ENCODE measurements at regions of chr3 and their contacts with region 1.

Region 1: GRCh38 chr3:179147873-179148615 is at the start of gene PIK3CA:
- DNase-seq: peak; percentile 96
- H3K4me3 Mint-ChIP-seq: peak within 1 kb of the TSS; percentile 89
- H3K27ac Mint-ChIP-seq: peak within 1 kb of the TSS; percentile 88
- H3K4me1 Mint-ChIP-seq: peaks cover 38% of the 10 kb centered on the region
- H3K27me3 Mint-ChIP-seq: peaks cover 4% of the 10 kb centered on the region
- total RNA-seq, gene PIK3CA: 16.7 to 19.1 TPM

Region 2: DNA sequence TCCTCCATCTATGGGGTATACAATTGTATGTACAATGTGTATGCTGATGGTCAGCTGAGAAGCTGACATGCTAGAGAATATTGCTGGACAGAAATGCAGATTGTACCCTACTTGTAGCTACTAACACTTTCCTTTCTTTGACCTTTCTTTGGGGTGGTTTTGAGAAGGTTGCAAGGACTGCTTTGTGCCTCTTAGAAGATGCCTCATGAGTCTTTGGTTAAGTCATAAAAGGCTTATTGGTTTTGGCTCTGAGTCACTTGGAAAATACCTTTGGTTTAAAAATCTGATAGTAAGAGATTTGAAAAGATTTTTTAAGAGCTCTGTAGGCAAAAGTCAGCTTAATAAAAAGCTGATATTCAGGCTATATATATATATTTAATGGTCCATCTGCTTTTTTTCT is 147.9 kb before region 1 on chr3:
- CTCF ChIA-PET with region 1: no interaction called
- POLR2A ChIA-PET with region 1: no interaction called
- intact Hi-C with region 1: loop called (anchors 1 kb)
- DNase-seq: no peak
- H3K4me3 Mint-ChIP-seq: no peak overlapping the region
- H3K27ac Mint-ChIP-seq: no peak overlapping the region
- H3K4me1 Mint-ChIP-seq: peaks cover 9% of the 10 kb centered on the region
- H3K27me3 Mint-ChIP-seq: peaks cover 2% of the 10 kb centered on the region

Region 3: GRCh38 chr3:179071550-179072397 is 76.3 kb before region 1 on chr3 and contains the start of gene ZMAT3:
- CTCF ChIA-PET with region 1: interaction called, 3 read pairs
- POLR2A ChIA-PET with region 1: interaction called, 7 read pairs
- intact Hi-C with region 1: loop called (anchors 1 kb)
- DNase-seq: peak; percentile 89
- H3K4me3 Mint-ChIP-seq: peak within 1 kb of the TSS; percentile 96
- H3K27ac Mint-ChIP-seq: peak within 1 kb of the TSS; percentile 89
- H3K4me1 Mint-ChIP-seq: peaks cover 35% of the 10 kb centered on the region
- H3K27me3 Mint-ChIP-seq: no peaks in the 10 kb centered on the region
- total RNA-seq, gene ZMAT3: 9.0 TPM

Region 4: DNA sequence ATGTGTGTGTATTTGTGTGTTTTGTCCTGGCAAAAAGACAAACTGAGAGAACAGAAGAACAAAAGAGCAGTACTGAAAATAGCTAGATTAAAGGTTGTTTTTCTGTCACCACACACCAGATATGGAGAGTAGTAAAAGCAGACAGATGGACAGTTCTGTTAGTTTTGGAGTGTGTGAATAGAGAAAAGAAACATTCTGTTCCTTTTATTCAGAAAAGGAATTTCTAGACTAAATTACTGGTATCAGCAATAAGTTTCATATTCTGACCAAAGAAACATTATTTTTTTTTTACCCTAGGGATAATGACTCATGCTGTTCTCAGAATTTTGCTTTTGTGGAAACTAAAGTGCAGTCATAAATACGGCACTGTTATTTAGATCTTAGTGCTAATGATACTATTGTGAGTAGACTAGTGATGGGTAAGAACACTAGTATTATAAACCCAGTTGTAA is 33.0 kb after region 1 on chr3:
- CTCF ChIA-PET with region 1: interaction called, 7 read pairs
- POLR2A ChIA-PET with region 1: interaction called, 34 read pairs
- intact Hi-C with region 1: loop called (anchors 1 kb)
- DNase-seq: no peak
- H3K4me3 Mint-ChIP-seq: no peak overlapping the region
- H3K27ac Mint-ChIP-seq: no peak overlapping the region
- H3K4me1 Mint-ChIP-seq: peaks cover 40% of the 10 kb centered on the region
- H3K27me3 Mint-ChIP-seq: no peaks in the 10 kb centered on the region

Region 5: GRCh38 chr3:179309225-179310078 is 161.4 kb after region 1 on chr3:
- CTCF ChIA-PET with region 1: interaction called, 12 read pairs
- POLR2A ChIA-PET with region 1: no interaction called
- intact Hi-C with region 1: no loop called
- DNase-seq: no peak
- H3K4me3 Mint-ChIP-seq: no peak overlapping the region
- H3K27ac Mint-ChIP-seq: no peak overlapping the region
- H3K4me1 Mint-ChIP-seq: no peaks in the 10 kb centered on the region
- H3K27me3 Mint-ChIP-seq: no peaks in the 10 kb centered on the region

Region 6: GRCh38 chr3:179562591-179563270 is 414.7 kb after region 1 on chr3 and contains the start of gene ACTL6A:
- CTCF ChIA-PET with region 1: no interaction called
- POLR2A ChIA-PET with region 1: interaction called, 3 read pairs
- intact Hi-C with region 1: loop called (anchors 1 kb)
- DNase-seq: peak; percentile 99
- H3K4me3 Mint-ChIP-seq: peak within 1 kb of the TSS; percentile 98
- H3K27ac Mint-ChIP-seq: peak within 1 kb of the TSS; percentile 98
- H3K4me1 Mint-ChIP-seq: peaks cover 28% of the 10 kb centered on the region
- H3K27me3 Mint-ChIP-seq: peaks cover 2% of the 10 kb centered on the region
- total RNA-seq, gene ACTL6A: 101 to 102 TPM

Region 7: DNA sequence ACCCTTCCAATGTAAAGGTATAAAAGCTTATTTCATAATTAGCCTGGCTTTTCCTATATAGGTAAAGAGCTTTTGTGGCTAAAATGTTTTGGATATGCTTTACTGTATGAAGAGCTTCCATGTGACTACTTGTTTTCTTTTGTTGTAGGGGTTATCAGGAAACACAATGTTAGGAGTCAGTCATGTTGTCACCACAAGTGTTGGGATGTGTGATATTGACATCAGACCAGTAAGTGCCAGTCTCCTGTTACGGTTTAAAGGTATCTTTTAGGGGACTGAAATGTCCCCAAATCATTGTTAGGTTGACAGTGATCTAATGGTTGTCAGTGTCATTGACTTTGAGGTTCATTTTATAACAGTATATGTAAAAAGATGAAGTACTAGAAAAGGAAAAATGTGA is 432.9 kb after region 1 on chr3:
- CTCF ChIA-PET with region 1: no interaction called
- POLR2A ChIA-PET with region 1: no interaction called
- intact Hi-C with region 1: no loop called
- DNase-seq: no peak
- H3K4me3 Mint-ChIP-seq: no peak overlapping the region
- H3K27ac Mint-ChIP-seq: no peak overlapping the region
- H3K4me1 Mint-ChIP-seq: no peaks in the 10 kb centered on the region
- H3K27me3 Mint-ChIP-seq: no peaks in the 10 kb centered on the region

Region 8: GRCh38 chr3:180319461-180319860 is 1171.4 kb after region 1 on chr3:
- CTCF ChIA-PET with region 1: no interaction called
- POLR2A ChIA-PET with region 1: no interaction called
- intact Hi-C with region 1: no loop called
- DNase-seq: no peak
- H3K4me3 Mint-ChIP-seq: no peak overlapping the region
- H3K27ac Mint-ChIP-seq: no peak overlapping the region
- H3K4me1 Mint-ChIP-seq: no peaks in the 10 kb centered on the region
- H3K27me3 Mint-ChIP-seq: no peaks in the 10 kb centered on the region